Activated CD4-positive, alpha-beta T cell treated with anti-CD3 and anti-CD28 coated beads, Interleukin-2, amount 10 ng/mL, durations not matched to agents 24 days and 14 days (primary cell): ENCODE measurements at regions of chr12 and their contacts with region 1.

Region 1: DNA sequence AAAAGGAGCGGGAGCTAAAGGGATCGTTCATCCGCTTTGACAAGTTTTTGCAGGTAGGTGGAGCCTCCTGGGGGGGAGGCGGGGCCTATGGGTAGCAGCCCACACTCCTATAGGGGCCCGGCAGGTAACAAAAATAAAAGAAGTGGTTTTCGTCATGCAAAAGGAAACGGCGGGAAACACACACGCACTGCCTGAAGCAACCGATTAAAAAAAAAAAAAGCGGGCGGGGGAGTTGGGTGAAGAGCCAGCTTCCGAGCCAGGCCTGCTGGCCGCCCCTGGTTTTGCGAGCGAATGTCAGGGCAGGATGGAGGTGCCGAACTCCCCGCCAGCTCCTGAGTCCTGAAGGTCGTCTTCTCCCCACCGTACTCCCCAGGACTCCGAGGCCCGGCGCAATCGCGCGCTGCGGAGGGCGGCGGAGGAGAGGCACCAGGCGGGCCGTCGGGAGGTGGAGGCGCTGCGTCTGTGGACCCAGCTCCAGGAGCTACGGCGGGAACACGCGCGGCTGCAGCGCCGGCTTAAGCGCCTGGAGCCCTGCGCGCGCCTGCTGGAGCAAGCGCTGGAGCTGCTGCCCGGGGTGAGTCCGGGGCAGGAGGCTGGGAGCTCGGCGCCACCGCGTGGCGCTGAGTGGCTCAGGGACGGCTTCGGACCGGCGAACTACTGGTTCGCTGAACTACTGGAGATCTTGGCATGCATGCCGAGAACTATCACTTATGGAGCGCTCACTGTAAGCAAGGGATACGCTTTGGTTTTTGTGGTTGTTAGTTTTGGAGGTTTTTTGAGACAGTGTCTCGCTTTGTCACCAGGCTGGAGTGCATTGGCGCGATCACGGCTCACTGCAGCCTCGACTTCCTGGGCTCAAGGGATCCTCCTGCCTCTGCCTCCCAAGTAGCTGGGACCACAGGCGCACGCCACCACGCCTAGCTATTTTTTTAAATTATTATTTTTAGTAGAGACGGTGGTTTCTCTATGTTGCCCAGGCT is 3.6 kb downstream of the CFAP73 start:
- DNase-seq: peak; percentile 86
- H3K4me3 Mint-ChIP-seq: peak overlapping the region; percentile 85
- H3K27ac Mint-ChIP-seq: no peak overlapping the region
- H3K4me1 Mint-ChIP-seq: peaks cover 10% of the 10 kb centered on the region
- H3K27me3 Mint-ChIP-seq: peaks cover 26% of the 10 kb centered on the region

Region 2: GRCh38 chr12:112906712-112907414 is 246.3 kb before region 1 on chr12 and contains the start of gene OAS1:
- intact Hi-C with region 1: loop called (anchors 10 kb)
- DNase-seq: peak; percentile 88
- H3K4me3 Mint-ChIP-seq: peak within 1 kb of the TSS; percentile 100
- H3K27ac Mint-ChIP-seq: peak within 1 kb of the TSS; percentile 97
- H3K4me1 Mint-ChIP-seq: peaks cover 81% of the 10 kb centered on the region
- H3K27me3 Mint-ChIP-seq: no peaks in the 10 kb centered on the region
- total RNA-seq, gene OAS1: 24.5 and 28.0 TPM in 2 replicates

Region 3: GRCh38 chr12:113048716-113049127 is 104.4 kb before region 1 on chr12:
- intact Hi-C with region 1: loop called (anchors 1 kb)
- DNase-seq: peak; percentile 89
- H3K4me3 Mint-ChIP-seq: no peak overlapping the region
- H3K27ac Mint-ChIP-seq: no peak overlapping the region
- H3K4me1 Mint-ChIP-seq: no peaks in the 10 kb centered on the region
- H3K27me3 Mint-ChIP-seq: peaks cover 16% of the 10 kb centered on the region

Region 4: GRCh38 chr12:113135178-113136127 is 17.7 kb before region 1 on chr12 and contains the start of gene RASAL1:
- intact Hi-C with region 1: loop called (anchors 1 kb)
- DNase-seq: peak; percentile 91
- H3K4me3 Mint-ChIP-seq: peak within 1 kb of the TSS; percentile 81
- H3K27ac Mint-ChIP-seq: peak within 1 kb of the TSS; percentile 54
- H3K4me1 Mint-ChIP-seq: peaks cover 16% of the 10 kb centered on the region
- H3K27me3 Mint-ChIP-seq: peaks cover 2% of the 10 kb centered on the region
- total RNA-seq, gene RASAL1: 0.52 and 1.1 TPM in 2 replicates

Region 5: DNA sequence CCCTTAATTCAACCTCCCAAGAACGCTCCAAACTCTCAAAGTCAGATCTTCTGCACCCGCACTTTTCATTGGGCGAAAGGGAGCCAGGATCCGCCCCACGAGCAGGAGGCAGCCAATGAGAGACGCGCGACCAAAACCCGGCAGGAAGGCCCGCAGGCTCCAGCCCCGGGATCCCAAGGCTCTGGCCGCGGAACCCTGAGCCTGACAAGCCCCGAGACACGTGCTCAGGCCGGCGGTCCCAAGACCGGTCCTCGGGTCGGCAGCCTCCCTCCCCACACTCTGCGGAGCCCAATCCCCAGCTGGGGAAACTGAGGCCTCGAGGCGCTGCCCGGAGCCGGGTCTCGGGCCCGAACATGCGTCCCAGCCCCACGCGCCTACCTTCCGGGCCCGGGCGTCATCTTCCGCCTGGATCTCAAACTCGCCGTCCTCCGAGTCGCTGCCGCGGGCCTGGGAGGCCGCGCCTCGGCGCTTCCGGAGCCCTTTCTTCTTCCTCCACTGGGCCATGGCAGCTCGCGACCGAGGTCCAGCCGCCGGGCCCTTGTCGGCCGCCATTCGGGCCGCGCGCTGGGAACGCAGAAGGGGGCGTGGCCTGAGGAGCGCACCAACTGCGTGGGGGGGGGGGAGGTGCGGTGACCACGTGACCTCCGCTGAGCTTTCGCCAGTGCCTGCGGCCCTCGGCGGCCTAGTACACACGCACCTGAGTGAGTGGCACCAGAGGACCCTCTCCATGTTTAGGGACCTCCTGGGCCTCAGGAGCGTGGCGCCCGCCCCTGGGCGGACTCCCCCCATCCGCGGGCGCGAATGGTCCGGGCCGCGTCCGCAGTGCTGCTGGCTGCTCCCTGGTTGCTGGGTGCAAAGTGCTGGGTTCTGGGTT is 32.0 kb after region 1 on chr12 and contains the starts of genes DDX54 and RITA1:
- intact Hi-C with region 1: loop called (anchors 2 kb)
- DNase-seq: peak; percentile 97
- H3K4me3 Mint-ChIP-seq: peak within 1 kb of the TSS; percentile 99
- H3K27ac Mint-ChIP-seq: peak within 1 kb of the TSS; percentile 98
- H3K4me1 Mint-ChIP-seq: peaks cover 20% of the 10 kb centered on the region
- H3K27me3 Mint-ChIP-seq: no peaks in the 10 kb centered on the region
- total RNA-seq, gene DDX54: 122 and 127 TPM in 2 replicates
- total RNA-seq, gene RITA1: 25.5 and 25.8 TPM in 2 replicates

Region 6: GRCh38 chr12:113392988-113393579 is 240.0 kb after region 1 on chr12:
- intact Hi-C with region 1: no loop called
- DNase-seq: no peak
- H3K4me3 Mint-ChIP-seq: no peak overlapping the region
- H3K27ac Mint-ChIP-seq: no peak overlapping the region
- H3K4me1 Mint-ChIP-seq: no peaks in the 10 kb centered on the region
- H3K27me3 Mint-ChIP-seq: no peaks in the 10 kb centered on the region